Activated naive CD4-positive, alpha-beta T cell treated with anti-CD3 and anti-CD28 coated beads, Interleukin-2, amount 10 ng/mL, durations not matched to agents 7 days and 5 days (primary cell): ENCODE measurements at regions of chr18 and their contacts with region 1.

Region 1: GRCh38 chr18:45690975-45691815 is 32.8 kb upstream of the SLC14A1 start:
- DNase-seq: peak; percentile 83
- H3K4me3 Mint-ChIP-seq: no peak overlapping the region
- H3K27ac Mint-ChIP-seq: no peak overlapping the region
- H3K4me1 Mint-ChIP-seq: peaks cover 44% of the 10 kb centered on the region
- H3K27me3 Mint-ChIP-seq: peaks cover 37% of the 10 kb centered on the region

Region 2: DNA sequence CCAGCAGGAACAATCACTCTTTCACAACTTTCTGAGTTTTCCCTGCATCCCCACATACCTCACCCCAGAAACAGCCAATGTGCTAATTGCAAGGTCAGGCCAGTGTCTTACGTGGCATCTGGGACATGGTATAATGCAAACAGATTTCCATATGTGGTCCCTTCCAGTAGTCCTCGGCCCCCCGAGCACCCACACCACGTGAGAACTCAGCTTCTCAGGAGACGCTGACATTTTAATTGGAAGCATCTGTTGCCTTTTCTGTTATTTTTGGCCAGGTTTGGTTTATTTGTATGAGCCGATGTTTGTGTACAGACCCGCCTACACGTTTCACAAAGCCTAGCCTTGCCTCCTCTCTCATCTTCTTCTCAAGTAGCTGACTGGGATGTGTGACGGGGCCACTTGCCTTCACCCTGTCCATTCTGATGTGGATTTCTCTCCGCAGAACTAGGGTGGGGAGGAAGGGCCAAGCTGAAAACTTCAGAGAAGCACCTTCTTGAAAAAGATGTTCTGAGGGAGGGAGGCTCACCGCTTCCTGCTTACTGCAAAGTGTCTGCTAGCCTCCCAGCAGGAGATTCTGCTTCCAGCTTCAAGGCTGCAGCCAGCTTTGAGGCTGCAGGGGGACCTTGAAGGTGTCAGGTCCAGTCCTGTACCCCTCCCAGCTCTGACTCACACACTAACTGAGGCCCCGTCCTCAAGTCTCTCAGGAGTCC is 185.5 kb before region 1 on chr18:
- CTCF ChIA-PET with region 1: no interaction called
- DNase-seq: no peak
- H3K4me3 Mint-ChIP-seq: no peak overlapping the region
- H3K27ac Mint-ChIP-seq: no peak overlapping the region
- H3K4me1 Mint-ChIP-seq: no peaks in the 10 kb centered on the region
- H3K27me3 Mint-ChIP-seq: no peaks in the 10 kb centered on the region

Region 3: GRCh38 chr18:45670281-45670962 is 20.8 kb before region 1 on chr18:
- CTCF ChIA-PET with region 1: interaction called, 97 read pairs
- DNase-seq: peak; percentile 63
- H3K4me3 Mint-ChIP-seq: peak overlapping the region; percentile 45
- H3K27ac Mint-ChIP-seq: peak overlapping the region; percentile 86
- H3K4me1 Mint-ChIP-seq: peaks cover 59% of the 10 kb centered on the region
- H3K27me3 Mint-ChIP-seq: peaks cover 36% of the 10 kb centered on the region

Region 4: DNA sequence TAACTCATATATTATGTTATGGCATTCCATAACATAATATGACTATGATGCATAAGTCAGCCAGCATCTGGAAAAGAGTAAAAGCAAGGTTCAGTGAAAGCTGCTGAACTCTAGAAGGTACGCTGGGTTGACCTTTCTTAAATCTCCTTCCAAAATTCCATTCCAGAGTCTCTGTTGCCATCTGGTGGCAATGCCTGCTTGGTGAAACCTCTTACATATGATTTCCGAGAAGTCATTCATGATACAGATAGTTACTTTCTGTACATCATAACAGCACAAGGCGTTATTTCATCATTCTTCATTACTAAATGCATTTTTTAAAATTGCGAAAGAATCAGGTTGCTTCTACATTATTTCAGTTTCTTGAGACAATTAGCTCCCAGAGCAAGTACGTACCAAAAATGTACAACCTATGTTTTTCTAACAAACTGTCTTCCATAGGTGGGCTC is 282.9 kb after region 1 on chr18:
- CTCF ChIA-PET with region 1: interaction called, 13 read pairs
- DNase-seq: peak; percentile 82
- H3K4me3 Mint-ChIP-seq: no peak overlapping the region
- H3K27ac Mint-ChIP-seq: peak overlapping the region; percentile 82
- H3K4me1 Mint-ChIP-seq: peaks cover 8% of the 10 kb centered on the region
- H3K27me3 Mint-ChIP-seq: no peaks in the 10 kb centered on the region